CD4-positive, alpha-beta memory T cell (primary cell): ENCODE measurements at regions of chr13 and their contacts with region 1.

Region 1: DNA sequence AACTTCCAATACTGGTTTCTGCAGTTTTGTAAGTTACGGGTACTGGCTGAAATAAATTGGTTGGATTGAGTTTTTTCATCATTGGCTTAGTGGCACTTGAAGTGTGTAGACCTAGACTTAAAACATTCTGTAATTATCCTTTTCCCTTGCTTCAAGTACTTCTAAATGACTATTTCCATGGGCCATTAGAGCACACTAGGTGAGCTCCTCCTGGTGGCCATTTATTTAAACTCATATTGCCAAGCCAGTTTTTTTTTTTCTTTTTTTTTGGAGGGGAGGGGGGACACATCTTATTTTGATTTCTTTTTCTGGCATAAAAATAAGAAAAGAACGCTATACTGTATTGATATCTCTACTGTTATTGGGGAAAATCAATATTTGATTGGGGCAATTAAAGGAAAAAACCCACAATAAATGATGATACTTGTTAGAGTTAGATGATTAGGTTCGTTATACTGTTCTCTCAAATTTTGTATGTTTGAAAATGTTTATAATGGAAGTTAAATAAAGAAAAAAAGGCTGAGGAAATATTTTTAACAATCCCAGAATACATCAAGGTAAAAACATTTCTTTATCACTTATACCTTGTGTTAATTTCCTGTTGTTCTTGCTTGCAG is 82.9 kb downstream of the PDS5B start:
- DNase-seq: peak; percentile 35 to 45 (median 40)
- H3K4me3 ChIP-seq: no peak overlapping the region
- H3K4me3 Mint-ChIP-seq: no peak overlapping the region
- H3K27ac ChIP-seq: no peak overlapping the region
- H3K27ac Mint-ChIP-seq: peak overlapping the region in 1 of 7 donors; percentile 21
- H3K4me1 ChIP-seq: no peaks in the 10 kb centered on the region
- H3K4me1 Mint-ChIP-seq: peaks cover 4 to 9% (median 5%) of the 10 kb centered on the region in 4 donors
- H3K27me3 ChIP-seq: no peaks in the 10 kb centered on the region
- H3K27me3 Mint-ChIP-seq: no peaks in the 10 kb centered on the region

Region 2: DNA sequence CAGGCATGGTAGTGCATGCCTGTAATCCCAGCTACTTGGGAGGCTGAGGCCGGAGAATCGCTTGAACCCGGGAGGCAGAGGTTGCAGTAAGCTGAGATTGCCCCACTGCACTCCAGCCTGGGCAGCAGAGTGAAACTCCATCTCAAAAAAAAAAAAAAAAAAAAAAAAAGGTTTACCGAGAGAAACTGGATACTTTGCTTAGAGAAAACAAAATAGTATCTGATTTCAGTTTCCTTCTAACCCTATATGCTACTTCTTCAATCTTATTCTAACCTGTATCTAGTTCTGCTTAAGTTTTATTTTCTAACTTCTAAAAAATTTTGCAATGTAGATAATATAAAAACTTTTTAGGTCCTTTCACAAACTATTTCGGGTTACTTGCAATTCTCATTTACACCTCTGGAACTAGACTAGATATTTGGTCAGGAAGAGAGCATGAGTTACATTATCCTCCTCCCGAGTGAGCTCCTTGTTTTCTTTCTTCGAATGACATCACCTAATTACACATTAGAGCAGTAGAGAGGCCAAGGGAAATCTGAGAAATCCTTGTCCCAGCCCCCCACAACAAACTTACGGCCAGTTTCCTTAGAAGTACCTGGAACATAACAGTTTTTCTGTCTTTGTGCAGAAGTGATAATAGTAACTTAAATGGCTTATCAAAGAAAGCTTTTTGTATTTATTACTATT is 1340.4 kb before region 1 on chr13:
- CTCF ChIA-PET with region 1: no interaction called
- POLR2A ChIA-PET with region 1: no interaction called
- intact Hi-C with region 1: no loop called
- DNase-seq: no peak
- H3K4me3 ChIP-seq: no peak overlapping the region
- H3K4me3 Mint-ChIP-seq: no peak overlapping the region
- H3K27ac ChIP-seq: no peak overlapping the region
- H3K27ac Mint-ChIP-seq: no peak overlapping the region
- H3K4me1 ChIP-seq: no peaks in the 10 kb centered on the region
- H3K4me1 Mint-ChIP-seq: no peaks in the 10 kb centered on the region
- H3K27me3 ChIP-seq: no peaks in the 10 kb centered on the region
- H3K27me3 Mint-ChIP-seq: no peaks in the 10 kb centered on the region

Region 3: GRCh38 chr13:32682130-32682529 is 13.0 kb after region 1 on chr13:
- CTCF ChIA-PET with region 1: interaction called, 13 read pairs
- POLR2A ChIA-PET with region 1: no interaction called
- intact Hi-C with region 1: no loop called
- DNase-seq: no peak
- H3K4me3 ChIP-seq: no peak overlapping the region
- H3K4me3 Mint-ChIP-seq: no peak overlapping the region
- H3K27ac ChIP-seq: no peak overlapping the region
- H3K27ac Mint-ChIP-seq: peak overlapping the region in 1 of 7 donors; percentile 5
- H3K4me1 ChIP-seq: no peaks in the 10 kb centered on the region
- H3K4me1 Mint-ChIP-seq: peaks cover 0 to 3% (median 0%) of the 10 kb centered on the region in 4 donors
- H3K27me3 ChIP-seq: no peaks in the 10 kb centered on the region
- H3K27me3 Mint-ChIP-seq: no peaks in the 10 kb centered on the region